Right ventricle myocardium inferior (tissue), 1 donor: ENCODE measurements at regions of chr6 and their contacts with region 1.

Region 1: DNA sequence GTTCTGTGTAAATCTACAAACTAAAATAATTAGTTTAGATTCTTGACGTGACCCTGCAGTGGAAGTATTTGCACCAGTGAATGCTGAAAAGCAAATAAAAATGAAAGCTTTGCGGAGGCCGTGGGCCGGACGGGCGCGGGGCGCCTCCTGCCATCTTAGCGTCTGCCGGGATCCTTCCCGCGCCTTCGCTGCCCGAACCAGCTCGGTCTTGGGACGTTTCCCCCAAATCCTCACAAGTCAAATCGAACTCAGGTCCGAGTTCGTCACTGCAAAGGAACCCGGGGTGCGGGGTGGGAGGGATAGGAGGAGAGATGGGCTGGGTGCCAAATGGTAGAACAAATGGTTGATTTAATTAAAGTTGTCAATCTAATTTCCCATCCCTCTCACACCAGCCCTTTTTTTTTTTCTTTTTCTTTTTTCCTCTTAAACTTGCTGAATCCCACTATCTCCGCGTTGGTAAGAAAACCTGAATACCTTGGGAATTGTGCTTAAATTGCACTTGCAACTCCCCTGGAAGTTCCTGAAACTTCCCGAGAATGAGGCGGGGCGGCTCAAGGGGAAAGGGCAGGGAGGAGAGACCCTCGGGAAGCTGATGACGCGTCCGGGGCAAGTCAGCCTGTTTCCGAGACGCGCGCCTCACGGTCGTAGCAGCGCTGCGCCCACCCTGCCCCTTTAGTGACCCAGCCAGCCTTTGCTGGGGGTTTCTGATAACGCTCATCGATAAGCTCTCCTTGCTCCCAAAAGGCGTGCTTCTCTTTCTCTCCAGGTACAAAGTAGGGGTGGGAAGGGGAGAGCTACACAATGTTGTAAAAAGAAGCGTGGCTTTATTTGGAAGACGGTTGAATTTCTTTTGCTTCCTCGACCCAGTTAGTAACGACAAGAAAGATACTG is 1.8 kb downstream of the GJA1 start:
- DNase-seq: no peak
- ATAC-seq: peak; percentile 40

Region 2: GRCh38 chr6:121504227-121504626 is 67.0 kb after region 1 on chr6:
- intact Hi-C with region 1: no loop called
- DNase-seq: no peak
- ATAC-seq: no peak

Region 3: DNA sequence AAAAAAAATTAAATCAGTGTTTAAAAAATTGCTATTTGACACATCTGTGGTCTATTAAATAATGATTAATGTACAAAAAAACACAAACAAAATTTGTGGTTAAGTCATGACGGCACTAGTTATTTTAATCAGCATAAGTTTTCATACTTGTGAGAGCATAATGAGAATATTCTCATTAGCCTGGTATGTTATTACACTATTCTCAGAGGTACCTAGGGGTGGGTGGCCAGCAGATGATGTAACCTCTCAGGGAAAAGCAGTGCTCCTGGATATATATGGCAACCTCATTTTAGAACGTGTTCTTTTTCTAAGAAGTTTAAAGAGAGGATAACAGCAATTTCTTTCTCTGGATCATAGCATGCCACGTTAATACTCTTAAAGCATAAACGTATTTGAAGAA is 107.5 kb after region 1 on chr6:
- intact Hi-C with region 1: no loop called
- DNase-seq: no peak
- ATAC-seq: no peak

Region 4: DNA sequence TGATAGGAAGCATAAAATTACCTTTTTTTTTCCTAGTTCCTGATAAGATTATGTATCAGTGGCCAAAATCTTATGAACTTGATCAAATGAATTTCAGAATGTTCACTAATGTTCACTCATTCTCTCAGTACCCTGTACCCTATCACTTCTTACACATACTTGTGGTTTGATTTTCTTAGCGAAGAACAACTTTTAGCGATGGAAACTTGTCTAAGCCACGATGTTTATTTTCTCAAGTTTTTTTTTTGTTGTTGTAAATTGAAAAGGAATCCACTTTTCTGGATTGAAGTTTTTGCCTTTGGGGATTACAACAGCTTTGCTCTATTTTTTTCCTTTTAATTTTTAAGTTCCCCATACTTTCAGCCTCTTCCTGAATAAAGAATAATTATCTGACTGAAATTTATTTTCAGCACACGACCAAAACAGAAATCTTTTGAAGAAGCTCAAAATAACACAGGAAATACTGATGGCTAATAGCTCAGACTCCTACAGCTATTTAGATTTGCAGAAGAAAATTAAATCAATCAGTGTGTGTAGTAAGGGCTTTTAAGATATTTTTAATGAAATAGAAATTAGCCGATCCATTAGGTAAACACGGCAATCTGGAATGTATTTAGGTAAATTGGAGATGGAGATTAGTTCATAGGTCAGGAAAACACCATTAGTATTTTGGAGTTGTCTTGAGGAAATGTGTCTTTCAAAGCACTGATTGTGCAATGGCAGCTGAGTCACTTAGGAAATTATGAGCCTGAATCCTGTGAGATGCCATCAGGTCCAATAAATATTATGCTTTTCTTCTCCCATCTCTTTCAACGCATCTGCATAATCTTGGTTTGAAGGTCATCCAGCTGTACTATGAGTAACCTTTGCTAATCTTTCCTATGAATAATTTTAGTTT is 215.8 kb after region 1 on chr6:
- intact Hi-C with region 1: loop called (anchors 5 kb)
- DNase-seq: no peak
- ATAC-seq: peak; percentile 34

Region 5: DNA sequence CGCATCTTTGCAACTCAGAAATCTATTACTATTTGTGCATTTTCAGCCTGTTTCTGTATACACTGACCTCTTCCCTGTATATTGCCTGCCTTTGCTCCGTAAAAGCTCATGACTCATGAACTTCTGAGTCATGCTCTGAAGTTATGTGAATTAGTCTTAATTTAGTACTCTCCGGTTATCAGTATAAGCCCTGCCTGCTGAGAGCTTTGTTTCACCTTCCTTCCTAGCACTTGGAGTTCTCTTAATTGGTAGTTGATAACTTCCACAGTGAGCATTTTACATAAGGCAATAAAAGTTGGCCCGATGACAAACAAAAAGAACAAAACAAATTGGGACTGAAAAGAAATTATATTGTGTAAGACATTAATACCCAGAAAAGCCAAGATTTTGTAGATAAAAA is 229.6 kb after region 1 on chr6:
- intact Hi-C with region 1: loop called (anchors 5 kb)
- DNase-seq: no peak
- ATAC-seq: peak; percentile 84

Region 6: GRCh38 chr6:121771937-121772720 is 334.9 kb after region 1 on chr6:
- intact Hi-C with region 1: loop called (anchors 5 kb)
- DNase-seq: no peak
- ATAC-seq: no peak

Region 7: GRCh38 chr6:121849477-121849876 is 412.3 kb after region 1 on chr6:
- intact Hi-C with region 1: loop called (anchors 1 kb)
- DNase-seq: no peak
- ATAC-seq: peak; percentile 78

Region 8: GRCh38 chr6:122014961-122015360 is 577.8 kb after region 1 on chr6:
- intact Hi-C with region 1: loop called (anchors 5 kb)
- DNase-seq: no peak
- ATAC-seq: no peak